SK-N-SH (cell line): ENCODE measurements at regions of chr10 and their contacts with region 1.

Region 1: DNA sequence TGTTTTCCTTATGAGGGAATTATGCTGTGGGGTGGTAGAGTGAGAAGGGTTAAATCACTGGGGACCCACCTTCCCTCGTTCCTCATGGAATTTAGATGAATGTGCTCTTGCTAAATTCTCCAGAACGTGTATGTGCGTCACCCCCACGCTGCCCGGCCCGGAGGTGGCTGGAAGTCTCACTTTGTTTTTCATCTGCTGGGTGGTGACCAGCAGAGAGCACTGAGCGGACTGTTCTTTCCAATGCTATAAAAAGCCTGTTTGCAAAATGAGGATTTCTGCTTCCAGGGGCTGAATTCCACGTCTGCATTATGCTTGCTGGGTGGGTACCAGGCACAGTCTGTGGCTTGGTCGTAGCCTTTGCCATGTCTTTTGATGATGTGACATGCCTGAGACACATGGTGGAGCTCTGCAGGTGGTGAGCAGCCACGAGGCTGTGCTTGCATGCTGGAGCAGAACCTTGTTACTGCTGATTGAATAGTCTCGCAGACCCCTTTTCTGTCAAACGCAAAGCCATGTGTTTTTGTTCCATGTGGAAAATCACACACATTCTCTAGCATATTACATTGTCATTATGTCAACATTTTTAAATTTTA is 31.9 kb upstream of the INSYN2A start:
- DNase-seq: no peak
- H3K4me3 ChIP-seq: no peak overlapping the region
- H3K27ac ChIP-seq: no peak overlapping the region
- H3K4me1 ChIP-seq: no peaks in the 10 kb centered on the region; a peak in 1 of 4 replicates
- H3K27me3 ChIP-seq: no peaks in the 10 kb centered on the region
- CTCF ChIP-seq: no peak
- EP300 ChIP-seq: no peak
- RAD21 ChIP-seq: no peak

Region 2: GRCh38 chr10:127243490-127244272 is 15.4 kb after region 1 on chr10:
- CTCF ChIA-PET with region 1: interaction called, 13 read pairs
- POLR2A ChIA-PET with region 1: no interaction called
- DNase-seq: peak; percentile 43
- H3K4me3 ChIP-seq: no peak overlapping the region; a peak in 1 of 4 replicates
- H3K27ac ChIP-seq: no peak overlapping the region
- H3K4me1 ChIP-seq: no peaks in the 10 kb centered on the region
- H3K27me3 ChIP-seq: no peaks in the 10 kb centered on the region
- CTCF ChIP-seq: peak; percentile 63
- EP300 ChIP-seq: no peak
- RAD21 ChIP-seq: peak; percentile 57